Endothelial cell of umbilical vein (primary cell): ENCODE measurements at regions of chr6 and their contacts with region 1.

Region 1: DNA sequence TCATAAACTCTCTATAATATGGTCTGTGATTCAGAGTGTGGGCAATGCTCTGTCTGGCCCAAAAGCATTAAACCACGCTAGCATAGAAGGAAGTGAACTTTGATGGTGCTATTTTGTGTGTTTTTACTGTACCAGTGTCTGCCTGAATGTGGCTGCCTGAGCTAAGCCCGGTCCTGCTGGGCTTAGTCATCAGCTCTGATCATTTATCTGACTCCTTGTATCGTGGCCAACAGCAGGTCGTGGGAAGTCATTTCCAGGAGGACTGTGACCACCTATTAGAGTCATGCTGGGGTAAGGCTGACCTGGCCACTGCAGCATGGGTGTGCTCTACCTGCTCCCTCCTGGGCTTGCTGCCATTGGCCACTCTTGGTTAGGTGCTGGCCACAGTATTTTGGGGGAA is 239.1 kb upstream of the CEP162 start:
- DNase-seq: peak; percentile 93
- H3K4me3 ChIP-seq: no peak overlapping the region
- H3K27ac ChIP-seq: peak overlapping the region; percentile 44
- H3K4me1 ChIP-seq: peaks cover 31% of the 10 kb centered on the region
- H3K27me3 ChIP-seq: no peaks in the 10 kb centered on the region
- CTCF ChIP-seq: no peak
- POLR2A ChIP-seq: no peak

Region 2: DNA sequence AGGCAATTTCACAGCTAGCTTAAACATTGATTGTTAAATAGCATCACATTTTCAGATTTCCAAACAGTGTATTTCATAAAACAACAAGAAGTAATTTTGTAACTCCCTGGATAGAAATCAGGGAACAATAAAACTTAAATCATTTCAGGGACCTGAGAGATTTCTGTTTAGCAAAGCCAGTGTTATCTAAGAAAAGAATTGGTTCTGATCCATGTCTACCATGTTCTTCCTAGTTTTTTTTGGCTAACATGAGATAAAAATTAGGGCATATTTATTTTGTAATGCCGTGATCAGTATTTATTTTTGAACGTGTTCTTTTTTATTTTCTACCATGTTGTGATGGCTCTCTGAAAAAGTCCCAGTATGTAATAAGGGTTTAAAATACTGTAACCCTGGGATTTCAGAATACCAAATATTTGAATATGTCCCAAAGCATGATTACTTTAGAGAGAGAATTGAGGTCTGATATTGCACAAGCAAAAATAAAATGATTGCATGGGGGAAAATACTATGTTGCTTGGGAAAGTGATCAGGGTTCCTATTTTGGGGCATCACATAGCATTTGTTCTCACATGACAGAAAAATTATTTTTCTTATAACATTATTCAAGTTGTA is 50.4 kb before region 1 on chr6:
- CTCF ChIA-PET with region 1: no interaction called
- POLR2A ChIA-PET with region 1: no interaction called
- dilution Hi-C with region 1: no loop called
- intact Hi-C with region 1: no loop called
- DNase-seq: no peak
- H3K4me3 ChIP-seq: no peak overlapping the region
- H3K27ac ChIP-seq: no peak overlapping the region
- H3K4me1 ChIP-seq: no peaks in the 10 kb centered on the region
- H3K27me3 ChIP-seq: peaks cover 8 to 16% of the 10 kb centered on the region in 2 experiments
- CTCF ChIP-seq: no peak
- POLR2A ChIP-seq: no peak

Region 3: GRCh38 chr6:84492241-84493165 is 26.0 kb after region 1 on chr6:
- CTCF ChIA-PET with region 1: interaction called, 15 read pairs
- POLR2A ChIA-PET with region 1: no interaction called
- dilution Hi-C with region 1: no loop called
- intact Hi-C with region 1: no loop called
- DNase-seq: peak; percentile 91
- H3K4me3 ChIP-seq: no peak overlapping the region
- H3K27ac ChIP-seq: peak overlapping the region; percentile 87
- H3K4me1 ChIP-seq: peaks cover 28% of the 10 kb centered on the region
- H3K27me3 ChIP-seq: no peaks in the 10 kb centered on the region
- CTCF ChIP-seq: no peak
- POLR2A ChIP-seq: peak; percentile 50

Region 4: GRCh38 chr6:84504025-84504424 is 37.5 kb after region 1 on chr6:
- CTCF ChIA-PET with region 1: no interaction called
- POLR2A ChIA-PET with region 1: no interaction called
- dilution Hi-C with region 1: no loop called
- intact Hi-C with region 1: no loop called
- DNase-seq: no peak
- H3K4me3 ChIP-seq: no peak overlapping the region
- H3K27ac ChIP-seq: no peak overlapping the region
- H3K4me1 ChIP-seq: no peaks in the 10 kb centered on the region
- H3K27me3 ChIP-seq: no peaks in the 10 kb centered on the region
- CTCF ChIP-seq: no peak
- POLR2A ChIP-seq: no peak

Region 5: GRCh38 chr6:84752118-84752850 is 285.8 kb after region 1 on chr6:
- CTCF ChIA-PET with region 1: no interaction called
- POLR2A ChIA-PET with region 1: no interaction called
- dilution Hi-C with region 1: no loop called
- intact Hi-C with region 1: no loop called
- DNase-seq: no peak
- H3K4me3 ChIP-seq: no peak overlapping the region
- H3K27ac ChIP-seq: no peak overlapping the region
- H3K4me1 ChIP-seq: peaks cover 2% of the 10 kb centered on the region
- H3K27me3 ChIP-seq: no peaks in the 10 kb centered on the region
- CTCF ChIP-seq: peak in 1 of 2 donors; percentile 9
- POLR2A ChIP-seq: no peak

Region 6: DNA sequence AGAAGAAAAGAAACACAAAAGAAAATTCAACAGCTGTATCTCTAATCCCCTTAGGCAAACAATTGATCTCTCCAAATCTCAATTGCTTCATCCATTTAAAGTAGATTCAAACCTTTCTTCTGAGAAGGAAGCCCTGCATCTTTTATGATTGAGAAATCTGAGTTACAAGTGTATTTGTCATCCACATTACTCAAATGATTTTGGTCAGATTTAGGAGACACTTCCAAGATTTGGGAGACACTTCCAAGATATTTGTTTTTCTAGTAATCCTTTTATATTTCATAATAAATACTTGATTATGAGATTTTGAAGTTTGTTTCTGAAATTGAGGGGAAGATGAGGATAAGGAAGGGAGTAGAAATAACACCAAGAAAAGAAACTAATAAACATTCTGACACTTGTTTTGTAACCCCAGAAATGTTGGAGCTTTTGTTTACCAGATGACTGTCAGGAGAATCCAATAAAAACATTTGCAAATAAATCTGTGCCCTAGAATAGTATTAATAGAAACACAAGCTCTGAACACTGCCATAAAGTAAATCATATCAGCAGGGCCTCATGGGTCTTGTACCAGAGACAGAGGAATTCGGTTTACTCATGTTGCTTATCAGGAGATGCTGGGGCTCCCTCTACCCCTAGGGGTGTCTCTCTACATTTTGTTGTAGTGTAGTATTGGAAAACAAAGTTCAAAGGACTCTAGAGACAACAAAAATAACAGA is 669.0 kb after region 1 on chr6:
- CTCF ChIA-PET with region 1: no interaction called
- POLR2A ChIA-PET with region 1: no interaction called
- dilution Hi-C with region 1: no loop called
- intact Hi-C with region 1: no loop called
- DNase-seq: no peak
- H3K4me3 ChIP-seq: no peak overlapping the region
- H3K27ac ChIP-seq: no peak overlapping the region
- H3K4me1 ChIP-seq: no peaks in the 10 kb centered on the region
- H3K27me3 ChIP-seq: peaks cover 0 to 2% of the 10 kb centered on the region in 2 experiments
- CTCF ChIP-seq: no peak
- POLR2A ChIP-seq: no peak